PC-9 (cell line): ENCODE measurements at regions of chr4 and their contacts with region 1.

Region 1: GRCh38 chr4:2647403-2648158 is 108.6 kb downstream of the TNIP2 start:
- DNase-seq: no peak
- H3K4me3 ChIP-seq: no peak overlapping the region
- H3K27ac ChIP-seq: no peak overlapping the region
- H3K4me1 ChIP-seq: no peaks in the 10 kb centered on the region
- H3K27me3 ChIP-seq: no peaks in the 10 kb centered on the region
- CTCF ChIP-seq: no peak

Region 2: DNA sequence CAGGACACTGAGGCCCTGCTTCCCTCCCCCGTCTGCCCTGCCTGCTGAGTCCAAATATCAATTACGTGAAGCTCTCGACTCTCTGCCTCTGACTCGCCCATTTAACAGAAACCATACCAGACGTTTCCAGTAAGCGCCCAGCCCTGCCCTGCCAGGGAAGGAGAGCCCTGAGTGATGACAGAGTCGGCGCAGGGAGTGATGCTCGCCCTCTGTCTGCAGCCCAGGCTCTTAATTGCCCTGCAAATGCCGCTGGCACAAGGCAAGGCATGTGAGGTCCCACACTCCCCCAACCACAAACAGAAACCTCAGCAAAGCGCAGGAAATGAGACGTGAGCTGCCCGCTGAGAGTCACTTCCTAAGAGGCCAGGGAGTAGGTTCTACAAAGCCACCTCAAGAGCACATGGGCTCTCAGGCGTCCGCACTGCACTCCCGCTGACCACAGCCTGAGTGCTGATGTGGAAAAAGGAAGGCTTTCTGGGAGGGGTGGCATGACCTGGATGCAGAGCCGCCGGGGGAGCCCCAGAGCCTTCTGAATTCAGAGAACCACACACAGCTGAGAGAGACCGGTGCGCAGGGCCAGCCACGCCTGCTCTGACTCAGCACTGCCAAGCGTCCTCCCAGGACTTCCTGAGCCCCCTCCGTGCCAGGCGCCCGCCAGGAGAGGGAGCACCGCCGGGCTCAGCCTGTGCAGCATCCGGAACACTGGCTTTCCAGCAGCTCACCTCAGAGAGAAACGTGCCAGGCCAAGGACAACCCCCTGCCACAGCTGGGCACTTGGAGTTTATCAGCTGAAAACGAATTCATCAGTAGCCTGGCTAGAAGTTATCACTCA is 234.5 kb before region 1 on chr4:
- CTCF ChIA-PET with region 1: no interaction called
- POLR2A ChIA-PET with region 1: no interaction called
- intact Hi-C with region 1: no loop called
- DNase-seq: peak; percentile 83 to 88
- H3K4me3 ChIP-seq: peak overlapping the region; percentile 50
- H3K27ac ChIP-seq: peak overlapping the region; percentile 76
- H3K4me1 ChIP-seq: peaks cover 29% of the 10 kb centered on the region
- H3K27me3 ChIP-seq: peaks cover 7% of the 10 kb centered on the region
- CTCF ChIP-seq: peak; percentile 44

Region 3: GRCh38 chr4:2673157-2673556 is 25.6 kb after region 1 on chr4:
- CTCF ChIA-PET with region 1: no interaction called
- POLR2A ChIA-PET with region 1: interaction called, 19 read pairs
- intact Hi-C with region 1: no loop called
- DNase-seq: no peak
- H3K4me3 ChIP-seq: no peak overlapping the region
- H3K27ac ChIP-seq: no peak overlapping the region
- H3K4me1 ChIP-seq: no peaks in the 10 kb centered on the region
- H3K27me3 ChIP-seq: no peaks in the 10 kb centered on the region
- CTCF ChIP-seq: no peak; the same call in 1 of the 2 replicates